Activated naive CD4-positive, alpha-beta T cell treated with anti-CD3 and anti-CD28 coated beads for 36 hours (primary cell): ENCODE measurements at regions of chr5 and their contacts with region 1.

Region 1: DNA sequence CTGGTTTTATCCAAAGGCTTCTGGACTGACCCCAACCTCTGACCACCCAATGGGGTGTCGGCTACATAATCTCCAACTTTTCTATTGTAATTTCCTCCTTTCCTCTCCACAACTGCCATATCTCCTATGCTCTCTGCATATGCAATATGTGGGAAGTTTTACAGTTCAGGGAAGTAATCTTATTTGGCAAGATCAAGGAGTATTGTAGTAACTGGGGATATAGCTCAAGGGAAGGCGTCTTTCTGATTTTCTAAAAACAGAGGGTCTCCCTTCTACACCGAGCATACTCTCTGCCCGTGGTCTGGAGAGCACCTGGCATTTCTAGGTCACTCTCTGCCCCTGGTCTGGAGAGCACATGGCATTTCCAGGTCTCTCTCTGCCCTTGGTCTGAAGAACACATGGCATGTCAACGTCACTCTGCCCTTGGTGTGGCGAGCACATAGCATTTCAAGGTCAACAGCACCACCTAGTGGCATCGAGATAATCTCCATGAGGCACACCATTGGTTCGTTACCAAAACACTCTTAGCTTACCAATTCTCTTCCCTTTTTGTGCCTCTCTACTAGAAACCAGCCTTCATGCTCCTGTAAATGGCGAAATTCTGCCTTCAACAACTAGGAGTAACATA is 616.4 kb upstream of the NUDT12 start:
- DNase-seq: peak; percentile 32
- H3K4me3 Mint-ChIP-seq: no peak overlapping the region
- H3K27ac Mint-ChIP-seq: no peak overlapping the region
- H3K4me1 Mint-ChIP-seq: no peaks in the 10 kb centered on the region
- H3K27me3 Mint-ChIP-seq: no peaks in the 10 kb centered on the region

Region 2: GRCh38 chr5:103582364-103582763 is 596.6 kb before region 1 on chr5:
- CTCF ChIA-PET with region 1: interaction called, 3 read pairs
- intact Hi-C with region 1: loop called (anchors 1 kb)
- DNase-seq: peak; percentile 42
- H3K4me3 Mint-ChIP-seq: no peak overlapping the region
- H3K27ac Mint-ChIP-seq: no peak overlapping the region
- H3K4me1 Mint-ChIP-seq: no peaks in the 10 kb centered on the region
- H3K27me3 Mint-ChIP-seq: peaks cover 3% of the 10 kb centered on the region

Region 3: GRCh38 chr5:104126980-104127379 is 52.0 kb before region 1 on chr5:
- CTCF ChIA-PET with region 1: no interaction called
- intact Hi-C with region 1: loop called (anchors 1 kb)
- DNase-seq: no peak
- H3K4me3 Mint-ChIP-seq: no peak overlapping the region
- H3K27ac Mint-ChIP-seq: no peak overlapping the region
- H3K4me1 Mint-ChIP-seq: no peaks in the 10 kb centered on the region
- H3K27me3 Mint-ChIP-seq: no peaks in the 10 kb centered on the region